Activated T-helper 1 cell treated with anti-CD3 and anti-CD28 coated beads, Interleukin-12 subunit alpha, Interleukin-12 subunit beta, Interleukin-2, Interleukin-4 antibody, amounts not matched to agents 30 ng/mL and 10 ng/mL and 1 ng/mL, durations not matched to agents 14 hours and 24 hours and 36 hours (primary cell): ENCODE measurements at regions of chr19 and their contacts with region 1.

Region 1: DNA sequence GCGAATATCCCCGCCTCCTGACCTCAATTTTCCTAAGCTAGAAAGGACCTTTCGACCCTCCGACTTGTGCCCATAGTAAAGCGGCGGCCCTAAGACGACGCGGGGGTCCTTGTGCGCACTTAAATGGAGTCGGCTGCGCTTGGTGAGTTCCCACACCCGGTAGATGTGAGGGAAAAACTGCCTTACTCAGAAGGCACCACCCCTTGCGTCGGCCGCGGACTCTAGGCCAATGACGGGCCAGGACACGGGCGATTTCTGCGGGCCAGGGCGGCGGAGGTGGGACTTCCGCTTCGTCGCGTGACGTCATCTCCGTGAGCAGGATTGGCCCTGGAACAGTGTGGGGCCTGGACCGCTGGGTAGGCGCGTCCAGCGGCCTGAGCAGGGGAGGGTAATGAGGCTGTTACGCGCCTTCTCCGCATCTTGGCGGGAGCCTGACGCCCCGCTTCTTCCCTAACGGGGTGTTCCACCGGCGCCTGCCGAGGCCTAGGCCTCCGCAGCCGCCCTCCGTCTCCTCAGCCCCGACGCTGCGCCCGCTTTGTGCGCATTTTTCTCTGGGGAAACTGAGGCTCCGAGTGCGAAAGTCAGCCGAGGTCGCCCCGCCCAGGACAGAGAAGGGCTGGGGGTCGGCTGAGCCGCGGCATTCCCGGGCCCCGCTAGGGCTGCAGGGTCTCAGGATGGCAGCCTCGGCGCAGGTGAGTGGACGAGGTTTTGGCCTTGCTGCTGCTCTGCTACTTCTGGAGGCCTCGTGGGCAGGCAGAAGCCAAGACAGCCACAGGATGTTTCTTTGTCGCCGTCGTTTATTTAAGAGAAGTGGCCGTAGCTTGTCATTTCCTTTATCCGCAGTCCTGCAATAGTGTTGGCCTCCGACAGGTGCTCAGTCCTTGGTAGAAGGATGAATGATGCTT is at the start of gene ZNF543:
- DNase-seq: peak; percentile 90
- H3K4me3 Mint-ChIP-seq: peak within 1 kb of the TSS; percentile 89
- H3K27ac Mint-ChIP-seq: peak within 1 kb of the TSS; percentile 97
- H3K4me1 Mint-ChIP-seq: peaks cover 28% of the 10 kb centered on the region
- H3K27me3 Mint-ChIP-seq: peaks cover 14% of the 10 kb centered on the region
- total RNA-seq, gene ZNF543: 5.1 and 5.4 TPM in 2 replicates

Region 2: DNA sequence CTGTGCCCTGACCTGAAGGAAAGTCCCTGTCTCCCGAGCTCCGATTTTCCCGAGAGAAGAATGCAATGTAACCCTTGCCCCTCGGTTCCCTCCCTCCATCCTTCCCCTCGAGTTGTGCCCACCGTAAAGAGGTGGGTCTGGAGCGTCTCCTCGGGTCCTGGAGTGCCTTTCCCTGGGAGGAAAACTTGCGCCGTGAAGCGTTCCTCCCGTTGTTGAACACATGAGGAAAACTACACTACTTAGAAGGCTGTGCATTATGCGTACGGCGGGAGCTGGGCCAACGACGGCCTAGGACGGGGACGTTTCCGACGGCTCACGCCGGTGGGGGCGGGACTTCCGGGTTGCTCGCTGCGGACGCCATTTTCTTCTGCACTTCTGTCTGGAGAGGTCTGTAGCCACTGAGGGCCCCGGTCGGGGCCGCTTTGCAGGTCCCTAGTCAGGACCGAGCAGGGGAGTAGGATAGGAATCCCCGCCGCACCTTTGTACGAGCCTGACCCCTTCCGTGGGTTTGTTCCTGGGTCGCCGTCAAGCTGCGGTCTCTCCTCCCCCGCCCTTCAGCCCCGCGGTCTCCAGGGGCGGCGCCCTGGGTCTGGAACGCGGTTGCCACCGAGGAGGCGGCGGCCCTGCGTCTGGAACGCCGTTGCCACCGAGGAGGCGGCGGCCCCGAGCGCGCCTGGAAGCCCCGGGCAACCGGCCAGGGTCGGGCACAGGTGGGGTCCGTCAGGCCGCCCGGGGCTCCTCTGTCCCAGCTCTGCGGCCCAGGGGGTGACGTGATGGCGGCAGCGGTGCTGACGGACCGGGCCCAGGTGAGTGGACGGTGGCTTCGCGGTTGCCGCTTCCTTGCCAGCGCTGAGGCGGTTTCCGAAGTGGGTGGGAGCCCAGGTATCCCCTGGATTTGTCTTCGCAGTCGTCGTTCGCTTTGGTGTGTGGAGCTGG is 129.0 kb before region 1 on chr19 and contains the start of gene ZNF264:
- intact Hi-C with region 1: loop called (anchors 1 kb)
- DNase-seq: peak; percentile 86
- H3K4me3 Mint-ChIP-seq: peak within 1 kb of the TSS; percentile 94
- H3K27ac Mint-ChIP-seq: peak within 1 kb of the TSS; percentile 85
- H3K4me1 Mint-ChIP-seq: peaks cover 24% of the 10 kb centered on the region
- H3K27me3 Mint-ChIP-seq: no peaks in the 10 kb centered on the region
- total RNA-seq, gene ZNF264: 16.1 and 18.3 TPM in 2 replicates

Region 3: GRCh38 chr19:57279418-57280066 is 40.9 kb before region 1 on chr19:
- intact Hi-C with region 1: loop called (anchors 1 kb)
- DNase-seq: peak; percentile 75
- H3K4me3 Mint-ChIP-seq: no peak overlapping the region
- H3K27ac Mint-ChIP-seq: no peak overlapping the region
- H3K4me1 Mint-ChIP-seq: peaks cover 23% of the 10 kb centered on the region
- H3K27me3 Mint-ChIP-seq: peaks cover 2% of the 10 kb centered on the region

Region 4: GRCh38 chr19:57350877-57351805 is 30.7 kb after region 1 on chr19 and contains the start of gene ZNF304:
- intact Hi-C with region 1: loop called (anchors 1 kb)
- DNase-seq: peak; percentile 84
- H3K4me3 Mint-ChIP-seq: peak within 1 kb of the TSS; percentile 92
- H3K27ac Mint-ChIP-seq: peak within 1 kb of the TSS; percentile 90
- H3K4me1 Mint-ChIP-seq: peaks cover 29% of the 10 kb centered on the region
- H3K27me3 Mint-ChIP-seq: no peaks in the 10 kb centered on the region
- total RNA-seq, gene ZNF304: 6.1 and 6.6 TPM in 2 replicates

Region 5: DNA sequence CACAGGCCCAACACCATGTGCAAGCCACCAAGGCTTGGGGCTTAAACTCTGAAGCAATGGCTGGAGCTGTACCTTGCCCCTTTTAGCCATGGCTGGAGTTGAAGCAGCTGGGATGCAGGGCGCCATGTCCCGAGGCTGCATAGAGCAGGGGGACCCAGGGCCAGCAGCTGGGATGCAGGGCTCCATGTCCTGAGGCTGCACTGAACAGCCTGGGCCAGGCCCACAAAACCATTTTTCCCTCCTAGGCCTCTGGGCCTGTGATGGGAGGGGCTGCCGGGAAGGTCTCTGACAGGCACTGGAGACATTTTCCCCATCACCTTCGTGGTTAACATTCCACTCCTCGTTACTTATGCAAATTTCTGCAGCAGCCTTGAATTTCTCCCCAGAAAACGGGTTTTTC is 53.7 kb after region 1 on chr19:
- intact Hi-C with region 1: no loop called
- DNase-seq: no peak
- H3K4me3 Mint-ChIP-seq: no peak overlapping the region
- H3K27ac Mint-ChIP-seq: no peak overlapping the region
- H3K4me1 Mint-ChIP-seq: no peaks in the 10 kb centered on the region
- H3K27me3 Mint-ChIP-seq: no peaks in the 10 kb centered on the region

Region 6: GRCh38 chr19:58154679-58155648 is 834.5 kb after region 1 on chr19:
- intact Hi-C with region 1: loop called (anchors 10 kb)
- DNase-seq: peak; percentile 89
- H3K4me3 Mint-ChIP-seq: peak overlapping the region; percentile 76
- H3K27ac Mint-ChIP-seq: peak overlapping the region; percentile 55
- H3K4me1 Mint-ChIP-seq: peaks cover 4% of the 10 kb centered on the region
- H3K27me3 Mint-ChIP-seq: no peaks in the 10 kb centered on the region